ENCODE measurements at regions of chr9 and their contacts with region 1.

Region 1: GRCh38 chr9:70510157-70510770 is 95.8 kb upstream of the KLF9 start:
- DNase-seq: peak; percentile 7 to 76
- H3K4me3 ChIP-seq: no peak overlapping the region
- H3K27ac ChIP-seq: no peak overlapping the region
- H3K4me1 ChIP-seq: no peaks in the 10 kb centered on the region
- H3K27me3 ChIP-seq: no peaks in the 10 kb centered on the region
- CTCF ChIP-seq: peak; percentile 63 to 86 (median 82)
- EP300 ChIP-seq: no peak
- POLR2A ChIP-seq: no peak
- RAD21 ChIP-seq: peak; percentile 49 to 60

Region 2: GRCh38 chr9:70451765-70452164 is 58.5 kb before region 1 on chr9:
- CTCF ChIA-PET with region 1: no interaction called
- POLR2A ChIA-PET with region 1: no interaction called
- DNase-seq: no peak
- H3K4me3 ChIP-seq: no peak overlapping the region
- H3K27ac ChIP-seq: no peak overlapping the region
- H3K4me1 ChIP-seq: no peaks in the 10 kb centered on the region
- H3K27me3 ChIP-seq: no peaks in the 10 kb centered on the region
- CTCF ChIP-seq: no peak
- EP300 ChIP-seq: no peak
- POLR2A ChIP-seq: no peak
- RAD21 ChIP-seq: no peak

Region 3: GRCh38 chr9:70494221-70494620 is 16.0 kb before region 1 on chr9:
- CTCF ChIA-PET with region 1: interaction called, 33 read pairs
- POLR2A ChIA-PET with region 1: no interaction called
- DNase-seq: no peak
- H3K4me3 ChIP-seq: no peak overlapping the region
- H3K27ac ChIP-seq: no peak overlapping the region
- H3K4me1 ChIP-seq: peaks cover 0 to 4% (median 0%) of the 10 kb centered on the region in 4 experiments; a peak in 1 of 7 replicates
- H3K27me3 ChIP-seq: no peaks in the 10 kb centered on the region
- CTCF ChIP-seq: no peak
- EP300 ChIP-seq: no peak
- POLR2A ChIP-seq: no peak
- RAD21 ChIP-seq: no peak

Region 4: GRCh38 chr9:70553707-70554673 is 43.7 kb after region 1 on chr9:
- CTCF ChIA-PET with region 1: interaction called, 10 read pairs
- POLR2A ChIA-PET with region 1: no interaction called
- DNase-seq: peak; percentile 39 to 54
- H3K4me3 ChIP-seq: no peak overlapping the region; a peak in 1 of 8 replicates
- H3K27ac ChIP-seq: peak overlapping the region; percentile 64; the same call in 1 of the 2 replicates
- H3K4me1 ChIP-seq: peaks cover 7 to 14% (median 10%) of the 10 kb centered on the region in 4 experiments; a peak in 5 of 7 replicates
- H3K27me3 ChIP-seq: no peaks in the 10 kb centered on the region
- CTCF ChIP-seq: no peak
- EP300 ChIP-seq: no peak
- POLR2A ChIP-seq: peak in 1 of 2 experiments; percentile 75; a peak in 1 of 3 replicates
- RAD21 ChIP-seq: no peak

Region 5: GRCh38 chr9:70587201-70587600 is 76.9 kb after region 1 on chr9:
- CTCF ChIA-PET with region 1: no interaction called
- POLR2A ChIA-PET with region 1: no interaction called
- DNase-seq: no peak
- H3K4me3 ChIP-seq: no peak overlapping the region
- H3K27ac ChIP-seq: no peak overlapping the region
- H3K4me1 ChIP-seq: no peaks in the 10 kb centered on the region
- H3K27me3 ChIP-seq: no peaks in the 10 kb centered on the region
- CTCF ChIP-seq: no peak
- EP300 ChIP-seq: no peak
- POLR2A ChIP-seq: no peak
- RAD21 ChIP-seq: no peak

Region 6: GRCh38 chr9:71048280-71048679 is 538.0 kb after region 1 on chr9:
- CTCF ChIA-PET with region 1: no interaction called
- POLR2A ChIA-PET with region 1: no interaction called
- DNase-seq: no peak
- H3K4me3 ChIP-seq: no peak overlapping the region
- H3K27ac ChIP-seq: no peak overlapping the region
- H3K4me1 ChIP-seq: no peaks in the 10 kb centered on the region; a peak in 1 of 7 replicates
- H3K27me3 ChIP-seq: no peaks in the 10 kb centered on the region
- CTCF ChIP-seq: no peak
- EP300 ChIP-seq: no peak
- POLR2A ChIP-seq: no peak
- RAD21 ChIP-seq: no peak

Measured in H1 (cell line).